Activated CD4-positive, alpha-beta memory T cell treated with anti-CD3 and anti-CD28 coated beads for 36 hours (primary cell): ENCODE measurements at regions of chr19 and their contacts with region 1.

Region 1: GRCh38 chr19:45643024-45643926 is 4.1 kb upstream of the EML2 start:
- DNase-seq: peak; percentile 97
- H3K4me3 Mint-ChIP-seq: peak overlapping the region; percentile 71
- H3K27ac Mint-ChIP-seq: peak overlapping the region; percentile 97
- H3K4me1 Mint-ChIP-seq: peaks cover 52% of the 10 kb centered on the region
- H3K27me3 Mint-ChIP-seq: no peaks in the 10 kb centered on the region

Region 2: DNA sequence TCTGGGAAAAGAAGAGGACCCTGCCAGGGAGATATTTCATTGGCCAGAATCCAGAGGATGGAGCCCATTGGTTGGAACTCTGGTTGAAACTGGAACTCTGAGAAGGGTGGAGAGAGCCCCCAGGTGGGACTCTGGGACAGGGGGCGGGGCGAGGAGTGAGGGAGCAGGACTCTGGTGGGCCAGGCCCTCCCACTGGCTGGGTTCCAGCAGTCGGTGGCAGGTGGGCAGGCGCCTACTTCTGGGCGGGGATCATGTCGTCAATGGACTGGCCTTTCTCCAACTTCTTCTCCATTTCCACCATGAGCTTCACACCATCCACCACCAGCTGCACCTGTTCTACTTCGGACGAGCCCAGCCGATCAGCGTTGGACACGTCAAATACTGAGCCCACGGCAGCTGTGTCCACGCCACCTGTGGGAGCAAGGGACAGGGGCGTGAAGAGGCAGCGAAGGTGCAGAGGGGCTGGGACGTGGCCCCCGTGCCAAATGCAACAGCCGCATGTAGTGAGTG is 336.7 kb before region 1 on chr19:
- CTCF ChIA-PET with region 1: no interaction called
- POLR2A ChIA-PET with region 1: no interaction called
- intact Hi-C with region 1: no loop called
- DNase-seq: no peak
- H3K4me3 Mint-ChIP-seq: no peak overlapping the region
- H3K27ac Mint-ChIP-seq: no peak overlapping the region
- H3K4me1 Mint-ChIP-seq: no peaks in the 10 kb centered on the region
- H3K27me3 Mint-ChIP-seq: no peaks in the 10 kb centered on the region

Region 3: DNA sequence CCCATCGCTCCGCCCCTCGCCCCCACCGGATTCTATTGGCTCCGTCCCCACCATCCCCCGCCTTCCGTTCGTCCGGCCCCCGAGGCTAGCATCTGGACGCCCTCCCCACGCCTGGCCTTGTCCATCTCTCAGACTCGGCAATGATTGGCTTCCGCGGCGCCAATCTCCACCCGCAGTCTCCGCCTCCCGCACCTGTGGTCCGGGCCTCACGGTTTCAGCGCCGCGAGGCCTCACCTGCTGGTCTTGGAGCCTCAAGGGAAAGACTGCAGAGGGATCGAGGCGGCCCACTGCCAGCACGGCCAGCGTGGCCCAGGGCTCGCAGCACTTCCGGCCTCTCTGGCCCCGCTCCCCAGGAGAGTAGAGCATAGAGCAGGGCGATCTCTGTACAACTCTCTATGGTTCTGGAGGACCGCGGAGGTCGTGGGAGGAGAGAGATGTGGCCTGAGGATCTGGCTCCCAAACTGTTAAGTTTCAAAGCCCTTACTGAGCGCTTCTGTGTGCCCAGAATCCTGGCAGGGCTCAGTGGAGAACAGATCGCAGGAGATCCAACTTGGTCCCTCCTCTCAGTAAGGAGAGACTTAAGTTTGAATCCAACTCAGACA is 219.6 kb before region 1 on chr19 and contains the start of gene ERCC1:
- CTCF ChIA-PET with region 1: no interaction called
- POLR2A ChIA-PET with region 1: no interaction called
- intact Hi-C with region 1: loop called (anchors 2 kb)
- DNase-seq: peak; percentile 92
- H3K4me3 Mint-ChIP-seq: peak within 1 kb of the TSS; percentile 85
- H3K27ac Mint-ChIP-seq: peak within 1 kb of the TSS; percentile 88
- H3K4me1 Mint-ChIP-seq: peaks cover 54% of the 10 kb centered on the region
- H3K27me3 Mint-ChIP-seq: peaks cover 2% of the 10 kb centered on the region
- total RNA-seq, gene ERCC1: 59.4 to 59.7 TPM

Region 4: DNA sequence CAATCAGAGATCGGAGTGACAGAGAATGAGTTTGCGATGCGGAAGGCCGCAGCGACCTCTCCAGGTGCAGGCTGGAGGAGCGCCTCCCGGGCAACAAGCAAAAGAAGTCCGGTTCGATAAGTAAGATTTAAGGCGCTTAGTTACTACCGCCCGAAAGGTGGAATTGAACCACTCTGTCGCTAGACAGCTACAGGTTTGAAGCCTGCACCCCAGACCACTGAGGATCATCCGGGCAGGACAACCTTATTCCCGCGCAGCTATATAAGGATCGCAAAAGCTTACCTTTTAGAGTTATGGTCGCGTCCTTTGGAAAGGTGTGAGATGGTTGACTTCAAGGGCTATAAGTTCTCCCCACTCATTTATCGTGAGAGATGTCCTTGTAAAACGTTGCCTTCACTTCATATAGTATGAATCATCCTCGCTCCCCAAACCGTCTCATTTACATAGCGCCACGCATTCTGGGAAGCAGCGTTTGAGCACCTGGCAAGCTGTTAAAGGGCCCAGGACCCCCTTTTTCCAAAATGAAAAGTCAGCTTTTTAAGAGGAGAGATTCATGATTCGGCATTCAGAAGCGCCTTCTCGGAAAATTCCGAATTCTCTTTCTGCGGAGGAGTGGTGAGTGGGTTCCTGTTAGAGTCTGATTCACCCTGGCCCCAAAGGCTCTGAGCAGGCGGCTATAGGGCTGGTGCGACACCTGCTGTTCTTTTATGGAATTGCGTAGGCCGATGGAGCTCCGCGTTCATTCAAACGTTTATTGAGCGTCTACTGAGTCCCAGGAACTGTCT is 164.6 kb before region 1 on chr19:
- CTCF ChIA-PET with region 1: interaction called, 7 read pairs
- POLR2A ChIA-PET with region 1: interaction called, 6 read pairs
- intact Hi-C with region 1: loop called (anchors 1 kb)
- DNase-seq: peak; percentile 96
- H3K4me3 Mint-ChIP-seq: peak overlapping the region; percentile 61
- H3K27ac Mint-ChIP-seq: peak overlapping the region; percentile 95
- H3K4me1 Mint-ChIP-seq: peaks cover 27% of the 10 kb centered on the region
- H3K27me3 Mint-ChIP-seq: no peaks in the 10 kb centered on the region

Region 5: GRCh38 chr19:45506246-45506990 is 136.9 kb before region 1 on chr19:
- CTCF ChIA-PET with region 1: interaction called, 13 read pairs
- POLR2A ChIA-PET with region 1: interaction called, 7 read pairs
- intact Hi-C with region 1: loop called (anchors 1 kb)
- DNase-seq: peak; percentile 99
- H3K4me3 Mint-ChIP-seq: peak overlapping the region; percentile 86
- H3K27ac Mint-ChIP-seq: peak overlapping the region; percentile 94
- H3K4me1 Mint-ChIP-seq: peaks cover 35% of the 10 kb centered on the region
- H3K27me3 Mint-ChIP-seq: no peaks in the 10 kb centered on the region

Region 6: GRCh38 chr19:45584332-45585157 is 58.7 kb before region 1 on chr19 and contains the start of gene OPA3:
- CTCF ChIA-PET with region 1: interaction called, 6 read pairs
- POLR2A ChIA-PET with region 1: interaction called, 4 read pairs
- intact Hi-C with region 1: loop called (anchors 1 kb)
- DNase-seq: peak; percentile 100
- H3K4me3 Mint-ChIP-seq: peak within 1 kb of the TSS; percentile 96
- H3K27ac Mint-ChIP-seq: peak within 1 kb of the TSS; percentile 97
- H3K4me1 Mint-ChIP-seq: peaks cover 11% of the 10 kb centered on the region
- H3K27me3 Mint-ChIP-seq: peaks cover 1% of the 10 kb centered on the region
- total RNA-seq, gene OPA3: 10.8 to 11.0 TPM

Region 7: GRCh38 chr19:45632468-45633196 is 10.6 kb before region 1 on chr19:
- CTCF ChIA-PET with region 1: interaction called, 19 read pairs
- POLR2A ChIA-PET with region 1: interaction called, 51 read pairs
- intact Hi-C with region 1: loop called (anchors 1 kb)
- DNase-seq: peak; percentile 75
- H3K4me3 Mint-ChIP-seq: no peak overlapping the region
- H3K27ac Mint-ChIP-seq: peak overlapping the region; percentile 68
- H3K4me1 Mint-ChIP-seq: peaks cover 24% of the 10 kb centered on the region
- H3K27me3 Mint-ChIP-seq: no peaks in the 10 kb centered on the region

Region 8: DNA sequence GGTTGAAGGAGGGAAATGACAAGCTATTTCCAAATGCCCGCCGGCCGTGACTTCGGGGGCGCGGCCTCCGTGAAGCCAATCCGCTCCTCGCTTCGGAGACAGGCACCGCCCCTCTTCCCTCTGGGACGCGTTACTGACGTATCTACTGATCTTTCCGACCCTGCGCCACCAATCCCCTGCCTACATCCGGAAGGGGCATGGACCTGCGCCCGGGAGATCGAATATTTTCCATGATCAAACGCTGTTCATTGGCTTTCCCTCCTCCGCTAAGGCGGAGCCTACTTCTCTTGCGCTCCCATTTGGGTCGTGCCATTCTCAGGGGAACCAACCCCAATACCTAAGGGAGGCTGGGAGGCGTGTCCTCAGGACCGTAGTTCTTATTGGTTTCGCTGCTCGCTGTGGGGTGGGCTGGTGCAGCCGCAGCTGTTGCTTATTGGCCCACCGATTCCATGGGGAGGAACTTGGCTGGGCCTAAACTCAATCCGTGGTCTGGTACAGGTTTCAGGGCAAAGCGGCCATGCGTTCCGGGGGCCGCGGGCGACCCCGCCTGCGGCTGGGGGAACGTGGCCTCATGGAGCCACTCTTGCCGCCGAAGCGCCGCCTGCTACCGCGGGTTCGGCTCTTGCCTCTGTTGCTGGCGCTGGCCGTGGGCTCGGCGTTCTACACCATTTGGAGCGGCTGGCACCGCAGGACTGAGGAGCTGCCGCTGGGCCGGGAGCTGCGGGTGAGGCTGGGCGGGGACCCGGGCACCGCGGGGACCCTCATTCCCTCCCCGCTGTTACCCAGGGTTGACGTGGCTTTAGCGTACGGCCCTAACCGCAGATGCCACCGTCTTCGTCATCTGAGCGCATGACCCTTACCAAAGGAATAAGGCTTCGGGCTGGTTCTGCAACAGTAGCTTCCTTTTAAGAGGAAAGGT is 49.2 kb after region 1 on chr19 and contains the start of gene QPCTL:
- CTCF ChIA-PET with region 1: interaction called, 24 read pairs
- POLR2A ChIA-PET with region 1: interaction called, 16 read pairs
- intact Hi-C with region 1: loop called (anchors 1 kb)
- DNase-seq: peak; percentile 99
- H3K4me3 Mint-ChIP-seq: peak within 1 kb of the TSS; percentile 97
- H3K27ac Mint-ChIP-seq: peak within 1 kb of the TSS; percentile 94
- H3K4me1 Mint-ChIP-seq: peaks cover 21% of the 10 kb centered on the region
- H3K27me3 Mint-ChIP-seq: no peaks in the 10 kb centered on the region
- total RNA-seq, gene QPCTL: 13.8 to 16.8 TPM